ENCODE measurements at regions of chr16 and their contacts with region 1.

Region 1: GRCh38 chr16:14186007-14186794 is 115.1 kb downstream of the MRTFB start:
- DNase-seq: no peak
- H3K4me3 Mint-ChIP-seq: no peak overlapping the region
- H3K27ac Mint-ChIP-seq: peak overlapping the region; percentile 2
- H3K4me1 Mint-ChIP-seq: peaks cover 30% of the 10 kb centered on the region
- H3K27me3 Mint-ChIP-seq: no peaks in the 10 kb centered on the region
- CTCF ChIP-seq: peak; percentile 36

Region 2: DNA sequence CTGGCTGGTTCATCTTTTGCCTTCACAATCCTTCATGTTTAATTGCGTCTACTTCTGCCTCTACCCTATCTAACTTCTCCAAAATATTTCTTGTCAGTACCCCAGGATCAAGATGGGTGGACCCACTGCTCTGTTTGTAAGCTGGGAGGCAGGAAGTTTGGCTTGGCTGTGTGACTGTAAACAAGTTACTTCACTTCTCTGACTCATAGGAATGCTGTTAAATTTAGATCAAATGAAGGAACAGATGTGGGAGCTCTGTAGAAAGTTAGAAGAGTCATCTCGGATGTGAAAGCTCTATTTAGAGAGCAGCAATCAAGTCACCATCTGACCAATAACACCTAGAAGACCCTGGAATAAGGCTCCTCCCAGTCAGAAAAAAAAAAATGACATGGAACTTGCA is 170.3 kb before region 1 on chr16:
- CTCF ChIA-PET with region 1: no interaction called
- intact Hi-C with region 1: loop called (anchors 5 kb)
- DNase-seq: no peak
- H3K4me3 Mint-ChIP-seq: no peak overlapping the region
- H3K27ac Mint-ChIP-seq: no peak overlapping the region
- H3K4me1 Mint-ChIP-seq: peaks cover 28% of the 10 kb centered on the region
- H3K27me3 Mint-ChIP-seq: no peaks in the 10 kb centered on the region
- CTCF ChIP-seq: no peak

Region 3: GRCh38 chr16:14070877-14071575 is 115.2 kb before region 1 on chr16 and contains the start of gene MRTFB:
- CTCF ChIA-PET with region 1: no interaction called
- intact Hi-C with region 1: loop called (anchors 5 kb)
- DNase-seq: peak; percentile 94
- H3K4me3 Mint-ChIP-seq: peak within 1 kb of the TSS; percentile 93
- H3K27ac Mint-ChIP-seq: peak within 1 kb of the TSS; percentile 94
- H3K4me1 Mint-ChIP-seq: peaks cover 43% of the 10 kb centered on the region
- H3K27me3 Mint-ChIP-seq: no peaks in the 10 kb centered on the region
- CTCF ChIP-seq: no peak
- total RNA-seq, gene MRTFB: 67.3 and 69.5 TPM in 2 replicates